ENCODE measurements at regions of chr14 and their contacts with region 1.

Region 1: GRCh38 chr14:61326847-61327246 is 5.5 kb downstream of the PRKCH start:
- DNase-seq: no peak
- H3K4me3 Mint-ChIP-seq: peak overlapping the region; percentile 93
- H3K27ac Mint-ChIP-seq: peak overlapping the region; percentile 86
- H3K4me1 Mint-ChIP-seq: peaks cover 77% of the 10 kb centered on the region
- H3K27me3 Mint-ChIP-seq: no peaks in the 10 kb centered on the region

Region 2: GRCh38 chr14:61178226-61179060 is 148.4 kb before region 1 on chr14:
- intact Hi-C with region 1: loop called (anchors 2 kb)
- DNase-seq: peak; percentile 27
- H3K4me3 Mint-ChIP-seq: peak overlapping the region; percentile 47
- H3K27ac Mint-ChIP-seq: peak overlapping the region; percentile 78
- H3K4me1 Mint-ChIP-seq: peaks cover 44% of the 10 kb centered on the region
- H3K27me3 Mint-ChIP-seq: peaks cover 2% of the 10 kb centered on the region

Region 3: DNA sequence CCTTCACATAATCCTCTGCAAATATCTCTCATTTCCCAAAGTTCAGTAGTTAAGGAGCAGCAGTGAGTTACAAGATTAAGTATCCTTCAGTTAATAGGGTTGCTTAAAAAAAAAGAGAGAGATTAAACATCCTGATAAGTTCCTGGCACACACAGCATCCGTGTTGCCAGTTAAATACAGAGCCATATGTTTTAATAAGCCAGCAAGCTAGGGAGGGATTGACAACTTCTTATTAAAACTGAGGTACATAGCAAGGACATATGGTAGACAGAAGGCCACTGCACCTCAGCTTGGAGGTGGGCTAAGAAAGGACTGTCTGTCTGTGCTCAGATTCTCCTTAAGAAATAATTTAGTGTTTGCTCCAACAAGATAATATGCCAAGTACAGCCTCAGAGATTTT is 36.1 kb before region 1 on chr14:
- intact Hi-C with region 1: no loop called
- DNase-seq: no peak
- H3K4me3 Mint-ChIP-seq: no peak overlapping the region
- H3K27ac Mint-ChIP-seq: no peak overlapping the region
- H3K4me1 Mint-ChIP-seq: peaks cover 28% of the 10 kb centered on the region
- H3K27me3 Mint-ChIP-seq: peaks cover 5% of the 10 kb centered on the region

Region 4: GRCh38 chr14:61388173-61388975 is 61.5 kb after region 1 on chr14:
- intact Hi-C with region 1: loop called (anchors 1 kb)
- DNase-seq: no peak
- H3K4me3 Mint-ChIP-seq: no peak overlapping the region
- H3K27ac Mint-ChIP-seq: no peak overlapping the region
- H3K4me1 Mint-ChIP-seq: peaks cover 13% of the 10 kb centered on the region
- H3K27me3 Mint-ChIP-seq: no peaks in the 10 kb centered on the region

Region 5: GRCh38 chr14:61503167-61503801 is 176.4 kb after region 1 on chr14:
- intact Hi-C with region 1: loop called (anchors 1 kb)
- DNase-seq: peak; percentile 51
- H3K4me3 Mint-ChIP-seq: peak overlapping the region; percentile 76
- H3K27ac Mint-ChIP-seq: peak overlapping the region; percentile 99
- H3K4me1 Mint-ChIP-seq: peaks cover 94% of the 10 kb centered on the region
- H3K27me3 Mint-ChIP-seq: no peaks in the 10 kb centered on the region